ENCODE measurements at regions of chr12 and their contacts with region 1.

Region 1: GRCh38 chr12:54993161-54993835 is 8.7 kb upstream of the TESPA1 start:
- DNase-seq: peak; percentile 60
- H3K4me3 ChIP-seq: peak overlapping the region in 1 of 2 experiments; percentile 0; a peak in 1 of 4 replicates
- H3K27ac ChIP-seq: no peak overlapping the region
- H3K4me1 ChIP-seq: no peaks in the 10 kb centered on the region
- H3K27me3 ChIP-seq: peaks cover 16% of the 10 kb centered on the region; the same call in 1 of the 2 replicates
- CTCF ChIP-seq: peak; percentile 90
- EP300 ChIP-seq: no peak
- RAD21 ChIP-seq: peak; percentile 85

Region 2: DNA sequence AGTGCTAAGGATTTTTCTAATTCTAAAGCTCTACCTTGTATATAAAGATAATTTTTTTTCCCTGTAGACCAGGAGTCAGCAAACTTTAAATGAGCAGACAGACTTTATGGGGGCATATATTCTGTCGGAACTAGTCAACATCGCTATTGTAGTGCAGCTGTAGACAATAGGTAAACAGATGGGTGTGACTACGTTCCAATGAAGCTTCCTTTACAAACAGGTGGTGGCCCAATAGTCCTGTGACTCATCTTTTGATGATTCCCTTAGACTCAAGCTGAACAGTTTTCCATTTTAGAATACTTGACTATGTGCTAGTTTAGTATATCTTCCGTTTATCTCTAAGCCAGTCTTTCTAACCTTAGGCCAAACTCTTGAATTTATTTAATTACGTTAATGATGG is 122.7 kb before region 1 on chr12:
- CTCF ChIA-PET with region 1: no interaction called
- POLR2A ChIA-PET with region 1: no interaction called
- DNase-seq: no peak
- H3K4me3 ChIP-seq: no peak overlapping the region
- H3K27ac ChIP-seq: no peak overlapping the region
- H3K4me1 ChIP-seq: no peaks in the 10 kb centered on the region
- H3K27me3 ChIP-seq: no peaks in the 10 kb centered on the region
- CTCF ChIP-seq: no peak
- EP300 ChIP-seq: no peak
- RAD21 ChIP-seq: no peak

Region 3: DNA sequence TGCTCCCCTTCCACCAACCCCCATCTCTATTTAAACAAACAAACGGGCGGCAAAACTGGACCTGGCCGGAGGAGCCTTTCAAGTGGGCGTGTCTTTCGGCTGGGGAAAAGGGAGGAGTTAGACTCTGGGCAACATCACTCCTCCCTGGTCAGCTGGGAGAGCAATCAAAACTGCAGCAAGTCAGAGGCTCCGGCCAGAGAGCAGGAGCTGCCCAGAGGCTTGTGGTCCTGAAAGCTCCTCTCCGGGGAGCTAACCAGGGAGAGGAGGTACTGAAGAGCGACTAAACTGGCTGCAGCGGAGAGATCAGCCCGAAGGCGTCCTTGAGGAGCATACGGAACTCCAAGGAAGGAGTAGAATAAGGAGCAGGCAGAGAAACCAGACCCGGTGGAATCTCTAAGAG is 26.5 kb after region 1 on chr12 and contains the start of gene NEUROD4:
- CTCF ChIA-PET with region 1: interaction called, 12 read pairs
- POLR2A ChIA-PET with region 1: no interaction called
- DNase-seq: no peak
- H3K4me3 ChIP-seq: no peak within 1 kb of the TSS
- H3K27ac ChIP-seq: no peak within 1 kb of the TSS
- H3K4me1 ChIP-seq: no peaks in the 10 kb centered on the region
- H3K27me3 ChIP-seq: no peaks in the 10 kb centered on the region
- CTCF ChIP-seq: no peak
- EP300 ChIP-seq: no peak
- RAD21 ChIP-seq: no peak
- polyA plus RNA-seq, gene NEUROD4: not detected in 2 replicates

Region 4: DNA sequence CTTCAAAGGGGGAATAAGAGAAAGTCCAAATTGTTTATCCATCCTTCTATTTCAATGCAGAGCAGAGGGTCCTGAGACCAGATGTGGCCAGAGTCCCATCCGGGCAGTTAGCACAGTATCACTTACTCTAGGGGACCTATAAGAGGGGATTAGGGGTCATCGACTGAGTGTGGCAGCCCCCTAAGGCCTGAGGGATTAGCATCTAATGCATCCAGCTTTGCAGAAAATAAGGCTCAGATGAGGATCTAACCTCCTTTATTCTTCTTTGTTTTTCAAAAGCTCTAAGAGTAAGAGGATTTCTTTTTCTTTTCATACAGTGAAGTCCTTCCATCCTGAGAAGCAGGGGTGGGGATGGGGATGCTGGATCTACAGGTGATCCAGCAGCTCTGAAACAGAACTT is 70.0 kb after region 1 on chr12:
- CTCF ChIA-PET with region 1: interaction called, 59 read pairs
- POLR2A ChIA-PET with region 1: no interaction called
- DNase-seq: no peak
- H3K4me3 ChIP-seq: no peak overlapping the region
- H3K27ac ChIP-seq: no peak overlapping the region
- H3K4me1 ChIP-seq: no peaks in the 10 kb centered on the region
- H3K27me3 ChIP-seq: no peaks in the 10 kb centered on the region; the same call in 1 of the 2 replicates
- CTCF ChIP-seq: no peak
- EP300 ChIP-seq: no peak
- RAD21 ChIP-seq: no peak

Region 5: GRCh38 chr12:55092579-55092978 is 99.3 kb after region 1 on chr12:
- CTCF ChIA-PET with region 1: interaction called, 10 read pairs
- POLR2A ChIA-PET with region 1: no interaction called
- DNase-seq: no peak
- H3K4me3 ChIP-seq: no peak overlapping the region
- H3K27ac ChIP-seq: no peak overlapping the region
- H3K4me1 ChIP-seq: no peaks in the 10 kb centered on the region
- H3K27me3 ChIP-seq: no peaks in the 10 kb centered on the region; the same call in 1 of the 2 replicates
- CTCF ChIP-seq: no peak; the same call in 1 of the 2 replicates
- EP300 ChIP-seq: no peak
- RAD21 ChIP-seq: no peak

Region 6: GRCh38 chr12:56071648-56072047 is 1078.3 kb after region 1 on chr12:
- CTCF ChIA-PET with region 1: no interaction called
- POLR2A ChIA-PET with region 1: no interaction called
- DNase-seq: no peak
- H3K4me3 ChIP-seq: no peak overlapping the region
- H3K27ac ChIP-seq: no peak overlapping the region; a peak in 1 of 4 replicates
- H3K4me1 ChIP-seq: no peaks in the 10 kb centered on the region
- H3K27me3 ChIP-seq: no peaks in the 10 kb centered on the region
- CTCF ChIP-seq: no peak
- EP300 ChIP-seq: no peak
- RAD21 ChIP-seq: no peak

Region 7: DNA sequence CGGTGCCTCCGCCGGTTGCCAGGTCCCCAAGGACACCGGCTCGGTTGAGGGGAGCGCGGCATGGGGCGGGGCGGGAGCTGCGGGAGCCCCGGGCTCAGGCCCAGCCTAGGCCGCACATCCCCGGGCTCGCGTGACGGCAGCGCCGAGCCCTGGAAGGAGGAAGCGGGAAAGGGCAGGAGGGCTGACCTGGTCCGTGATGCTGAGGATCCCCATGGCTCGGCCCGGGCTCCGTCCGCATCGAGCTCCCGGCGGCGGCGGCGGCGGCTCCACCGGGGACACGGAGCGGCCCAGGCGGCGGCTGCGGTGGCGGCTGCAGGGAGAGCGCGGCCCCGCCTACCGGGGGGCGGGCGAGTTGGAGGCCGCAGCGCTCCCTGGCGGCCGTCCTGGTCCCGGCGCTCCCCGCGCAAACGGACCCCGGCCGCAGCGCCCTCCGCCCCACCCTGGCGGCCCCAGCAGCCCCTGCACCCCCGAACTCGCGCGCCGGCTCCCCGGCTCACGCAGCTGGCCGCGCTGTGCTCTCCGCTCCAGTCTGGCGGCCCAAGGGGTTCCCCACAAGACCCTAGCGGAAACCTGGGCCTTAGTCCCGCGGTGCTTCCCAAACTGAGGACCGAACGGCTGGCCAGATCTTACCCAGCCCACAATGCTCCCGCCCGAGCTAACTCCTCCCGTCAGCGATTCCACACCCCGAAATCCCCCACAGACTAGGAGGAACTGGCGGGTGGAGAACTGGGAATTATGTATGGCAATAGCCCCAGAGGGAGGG is 1264.9 kb after region 1 on chr12 and contains the start of gene ANKRD52:
- CTCF ChIA-PET with region 1: no interaction called
- POLR2A ChIA-PET with region 1: no interaction called
- DNase-seq: peak; percentile 98
- H3K4me3 ChIP-seq: peak within 1 kb of the TSS; percentile 90 to 95
- H3K27ac ChIP-seq: peak within 1 kb of the TSS; percentile 75 to 92
- H3K4me1 ChIP-seq: peaks cover 15 to 19% of the 10 kb centered on the region in 2 experiments
- H3K27me3 ChIP-seq: no peaks in the 10 kb centered on the region
- CTCF ChIP-seq: peak; percentile 68
- EP300 ChIP-seq: no peak; a peak in 1 of 4 replicates
- RAD21 ChIP-seq: peak; percentile 8; the same call in 1 of the 2 replicates
- polyA plus RNA-seq, gene ANKRD52: 22.5 and 23.4 TPM in 2 replicates

Region 8: DNA sequence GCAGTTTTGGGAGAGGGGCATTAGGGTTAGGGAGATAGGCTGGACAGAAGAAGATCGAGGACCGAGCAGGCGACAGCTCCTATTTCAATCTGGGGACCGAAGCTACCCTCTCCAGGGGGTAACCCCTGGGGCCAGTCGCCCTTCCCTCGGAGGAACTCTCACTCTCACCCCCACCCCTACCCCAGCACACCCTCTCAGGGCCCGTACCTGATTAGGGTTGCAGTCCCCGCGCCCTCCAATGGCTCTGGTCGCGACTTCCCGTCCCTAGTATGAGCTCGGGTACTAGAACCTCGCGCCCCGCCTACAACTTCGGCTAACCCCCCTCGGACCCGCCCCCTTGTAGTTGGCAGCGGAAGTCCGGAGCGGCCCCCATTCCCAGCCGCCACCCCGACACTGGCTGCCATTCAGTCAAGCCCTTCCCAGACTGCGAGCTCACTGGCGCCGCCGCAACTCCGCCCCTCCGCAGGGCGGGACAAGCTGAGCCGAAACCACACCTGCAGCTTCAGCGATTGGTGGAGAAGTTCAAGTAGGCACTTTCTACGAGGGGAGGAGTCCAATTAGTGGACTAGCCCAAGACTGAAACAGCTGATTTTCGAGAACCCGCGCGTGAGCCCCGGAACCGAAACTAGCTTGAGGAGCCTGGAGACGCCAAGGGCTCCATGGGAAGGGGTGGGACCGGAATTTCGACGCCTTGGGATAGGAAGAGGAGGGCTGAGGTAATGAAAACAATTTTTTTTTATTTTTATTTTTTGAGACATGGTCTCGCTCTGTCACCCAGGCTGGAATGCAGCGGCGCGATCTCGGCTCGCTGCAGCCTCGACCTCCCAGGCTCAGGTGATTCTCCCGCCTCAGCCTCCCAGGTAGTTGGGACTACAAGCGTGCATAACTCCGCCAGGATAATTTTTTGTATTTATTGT is 1366.8 kb after region 1 on chr12 and contains the start of gene STAT2:
- CTCF ChIA-PET with region 1: no interaction called
- POLR2A ChIA-PET with region 1: no interaction called
- DNase-seq: peak; percentile 93
- H3K4me3 ChIP-seq: peak within 1 kb of the TSS; percentile 81 to 82
- H3K27ac ChIP-seq: peak within 1 kb of the TSS; percentile 79 to 80
- H3K4me1 ChIP-seq: peaks cover 0 to 9% of the 10 kb centered on the region in 2 experiments; a peak in 1 of 4 replicates
- H3K27me3 ChIP-seq: no peaks in the 10 kb centered on the region
- CTCF ChIP-seq: no peak
- EP300 ChIP-seq: peak; percentile 3 to 60; a peak in 3 of 4 replicates
- RAD21 ChIP-seq: no peak
- polyA plus RNA-seq, gene STAT2: 58.1 and 91.4 TPM in 2 replicates